ENCODE measurements at regions of chr11 and their contacts with region 1.

Region 1: GRCh38 chr11:44286268-44286880 is 23.6 kb downstream of the ALX4 start:
- DNase-seq: peak in 1 of 2 experiments; percentile 89
- H3K4me3 ChIP-seq: no peak overlapping the region
- H3K27ac ChIP-seq: no peak overlapping the region
- H3K4me1 ChIP-seq: peaks cover 0 to 2% (median 0%) of the 10 kb centered on the region in 4 experiments; a peak in 1 of 7 replicates
- H3K27me3 ChIP-seq: no peaks in the 10 kb centered on the region
- CTCF ChIP-seq: peak; percentile 96 to 99 (median 98)
- EP300 ChIP-seq: peak in 1 of 2 experiments; percentile 27; a peak in 1 of 3 replicates
- POLR2A ChIP-seq: no peak
- RAD21 ChIP-seq: peak; percentile 96 to 98

Region 2: GRCh38 chr11:44207292-44207691 is 79.1 kb before region 1 on chr11:
- CTCF ChIA-PET with region 1: no interaction called
- POLR2A ChIA-PET with region 1: no interaction called
- DNase-seq: no peak
- H3K4me3 ChIP-seq: no peak overlapping the region
- H3K27ac ChIP-seq: no peak overlapping the region
- H3K4me1 ChIP-seq: peaks cover 0 to 6% (median 0%) of the 10 kb centered on the region in 4 experiments; a peak in 1 of 7 replicates
- H3K27me3 ChIP-seq: no peaks in the 10 kb centered on the region
- CTCF ChIP-seq: no peak
- EP300 ChIP-seq: no peak
- POLR2A ChIP-seq: no peak
- RAD21 ChIP-seq: no peak

Region 3: DNA sequence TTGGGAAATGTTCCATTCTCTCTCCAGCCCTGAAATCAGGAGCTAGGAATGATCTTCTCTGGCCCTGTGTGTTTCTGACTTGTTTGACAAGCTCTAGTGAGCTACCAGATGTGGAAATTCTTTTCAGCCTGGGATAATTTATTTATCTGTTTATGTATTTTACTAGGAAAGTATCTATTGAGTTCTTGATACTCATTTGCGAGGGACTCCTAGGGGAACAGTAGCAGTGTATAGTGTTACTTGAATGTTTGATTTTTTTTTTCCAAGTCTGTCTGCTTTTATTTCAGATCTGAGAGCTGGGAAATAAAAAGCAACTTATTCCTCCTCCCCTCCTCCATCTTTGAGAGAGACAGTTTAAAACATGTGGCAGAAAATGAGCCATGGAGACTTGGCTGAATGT is 68.9 kb before region 1 on chr11:
- CTCF ChIA-PET with region 1: no interaction called
- POLR2A ChIA-PET with region 1: no interaction called
- DNase-seq: no peak
- H3K4me3 ChIP-seq: no peak overlapping the region
- H3K27ac ChIP-seq: no peak overlapping the region
- H3K4me1 ChIP-seq: no peaks in the 10 kb centered on the region
- H3K27me3 ChIP-seq: no peaks in the 10 kb centered on the region
- CTCF ChIP-seq: no peak
- EP300 ChIP-seq: no peak
- POLR2A ChIP-seq: no peak
- RAD21 ChIP-seq: no peak

Region 4: GRCh38 chr11:44269369-44270351 is 16.7 kb before region 1 on chr11:
- CTCF ChIA-PET with region 1: interaction called, 20 read pairs
- POLR2A ChIA-PET with region 1: no interaction called
- DNase-seq: no peak
- H3K4me3 ChIP-seq: no peak overlapping the region
- H3K27ac ChIP-seq: no peak overlapping the region
- H3K4me1 ChIP-seq: no peaks in the 10 kb centered on the region; a peak in 2 of 7 replicates
- H3K27me3 ChIP-seq: no peaks in the 10 kb centered on the region
- CTCF ChIP-seq: no peak
- EP300 ChIP-seq: no peak
- POLR2A ChIP-seq: no peak
- RAD21 ChIP-seq: no peak

Region 5: GRCh38 chr11:44315947-44316658 is 29.7 kb after region 1 on chr11:
- CTCF ChIA-PET with region 1: interaction called, 41 read pairs
- POLR2A ChIA-PET with region 1: no interaction called
- DNase-seq: peak in 1 of 2 experiments; percentile 64
- H3K4me3 ChIP-seq: peak overlapping the region; percentile 13 to 58 (median 20); a peak in 7 of 8 replicates
- H3K27ac ChIP-seq: no peak overlapping the region
- H3K4me1 ChIP-seq: peaks cover 3 to 34% (median 22%) of the 10 kb centered on the region in 4 experiments
- H3K27me3 ChIP-seq: peaks cover 99 to 100% (median 100%) of the 10 kb centered on the region in 4 experiments
- CTCF ChIP-seq: no peak
- EP300 ChIP-seq: no peak
- POLR2A ChIP-seq: no peak
- RAD21 ChIP-seq: no peak

Region 6: GRCh38 chr11:44333271-44334218 is 47.2 kb after region 1 on chr11:
- CTCF ChIA-PET with region 1: interaction called, 47 read pairs
- POLR2A ChIA-PET with region 1: no interaction called
- DNase-seq: no peak
- H3K4me3 ChIP-seq: no peak overlapping the region
- H3K27ac ChIP-seq: no peak overlapping the region
- H3K4me1 ChIP-seq: peaks cover 3 to 9% (median 5%) of the 10 kb centered on the region in 4 experiments; a peak in 6 of 7 replicates
- H3K27me3 ChIP-seq: peaks cover 7 to 68% (median 57%) of the 10 kb centered on the region in 4 experiments
- CTCF ChIP-seq: no peak
- EP300 ChIP-seq: no peak
- POLR2A ChIP-seq: no peak
- RAD21 ChIP-seq: no peak

Measured in H1 (cell line).